Mammary epithelial cell (primary cell): ENCODE measurements at regions of chr14 and their contacts with region 1.

Region 1: DNA sequence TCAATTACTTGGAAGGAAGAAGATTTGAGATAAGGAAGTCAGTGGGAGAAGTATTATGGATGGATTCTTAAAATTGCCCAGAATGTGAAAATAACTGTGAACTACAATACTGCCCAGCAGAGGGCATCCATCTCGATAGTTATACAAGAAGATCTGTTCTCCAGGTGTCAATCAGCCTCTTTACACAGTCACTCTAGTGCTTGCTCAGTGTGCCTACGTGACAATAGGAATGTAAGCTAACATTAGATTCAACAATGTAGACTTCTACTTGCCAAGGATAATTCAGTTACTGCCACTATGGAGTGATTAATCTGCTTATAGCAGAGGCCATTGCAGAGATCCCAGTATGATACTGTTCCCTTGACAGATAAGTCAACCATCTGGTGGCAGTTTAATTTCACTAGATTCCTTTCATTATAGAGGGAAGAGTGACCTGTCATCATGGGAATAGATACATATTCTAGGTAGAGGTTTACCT is 10.6 kb upstream of the MAP4K5 start:
- DNase-seq: peak; percentile 60
- H3K4me3 ChIP-seq: no peak overlapping the region
- H3K27ac ChIP-seq: no peak overlapping the region
- H3K4me1 ChIP-seq: peaks cover 7% of the 10 kb centered on the region
- H3K27me3 ChIP-seq: no peaks in the 10 kb centered on the region
- CTCF ChIP-seq: peak; percentile 54 to 63

Region 2: DNA sequence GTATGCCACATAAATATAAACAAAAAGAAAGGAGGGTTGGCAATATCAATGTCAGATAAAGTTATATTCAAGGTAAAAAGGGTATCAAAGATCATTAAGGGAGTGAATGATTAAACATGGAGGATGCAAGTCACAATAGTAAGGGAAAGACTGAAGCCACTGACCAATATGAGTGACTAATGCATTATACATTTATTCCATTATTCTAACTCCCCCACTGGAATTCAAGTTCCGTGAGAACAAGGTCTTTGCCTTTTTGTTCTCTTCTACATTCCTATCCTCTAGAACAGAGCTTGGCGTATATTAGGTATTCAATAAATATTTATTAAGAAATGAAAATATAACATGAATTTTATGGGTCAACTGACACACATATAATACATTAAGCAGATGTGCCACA is 41.3 kb before region 1 on chr14:
- CTCF ChIA-PET with region 1: no interaction called
- dilution Hi-C with region 1: no loop called
- in situ Hi-C with region 1: no loop called
- intact Hi-C with region 1: no loop called
- DNase-seq: peak; percentile 70
- H3K4me3 ChIP-seq: no peak overlapping the region
- H3K27ac ChIP-seq: peak overlapping the region; percentile 75
- H3K4me1 ChIP-seq: peaks cover 18% of the 10 kb centered on the region
- H3K27me3 ChIP-seq: no peaks in the 10 kb centered on the region
- CTCF ChIP-seq: no peak

Region 3: GRCh38 chr14:50619556-50620141 is 76.7 kb after region 1 on chr14:
- CTCF ChIA-PET with region 1: no interaction called
- dilution Hi-C with region 1: no loop called
- in situ Hi-C with region 1: no loop called
- intact Hi-C with region 1: loop called (anchors 1 kb)
- DNase-seq: peak; percentile 32
- H3K4me3 ChIP-seq: no peak overlapping the region
- H3K27ac ChIP-seq: no peak overlapping the region
- H3K4me1 ChIP-seq: peaks cover 9% of the 10 kb centered on the region
- H3K27me3 ChIP-seq: no peaks in the 10 kb centered on the region
- CTCF ChIP-seq: peak; percentile 71 to 75

Region 4: DNA sequence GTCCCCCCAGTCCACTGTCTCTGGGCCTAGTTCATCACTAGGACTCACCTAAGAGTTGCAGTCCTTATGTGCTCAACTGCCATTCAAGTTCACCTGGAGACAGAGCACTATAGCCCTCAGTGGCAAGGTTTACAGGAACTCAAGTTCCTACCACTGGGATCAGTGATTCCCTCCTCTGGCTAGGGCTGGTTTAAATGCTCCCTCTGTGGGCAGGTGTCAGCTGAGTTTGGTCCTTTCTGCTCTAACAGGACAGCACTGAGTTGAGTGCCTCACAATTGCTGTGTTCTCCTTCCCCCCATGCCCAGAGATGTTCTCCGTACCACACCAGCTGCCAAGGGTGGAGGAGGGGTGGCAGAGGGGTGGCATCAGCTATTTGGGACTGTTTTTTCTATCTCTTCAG is 145.9 kb after region 1 on chr14:
- CTCF ChIA-PET with region 1: no interaction called
- dilution Hi-C with region 1: no loop called
- in situ Hi-C with region 1: no loop called
- intact Hi-C with region 1: loop called (anchors 1 kb)
- DNase-seq: peak; percentile 10
- H3K4me3 ChIP-seq: no peak overlapping the region
- H3K27ac ChIP-seq: no peak overlapping the region
- H3K4me1 ChIP-seq: no peaks in the 10 kb centered on the region
- H3K27me3 ChIP-seq: no peaks in the 10 kb centered on the region
- CTCF ChIP-seq: peak in 1 of 2 donors; percentile 47

Region 5: GRCh38 chr14:50714450-50715073 is 171.6 kb after region 1 on chr14:
- CTCF ChIA-PET with region 1: no interaction called
- dilution Hi-C with region 1: no loop called
- in situ Hi-C with region 1: no loop called
- intact Hi-C with region 1: loop called (anchors 1 kb)
- DNase-seq: peak; percentile 44
- H3K4me3 ChIP-seq: no peak overlapping the region
- H3K27ac ChIP-seq: no peak overlapping the region
- H3K4me1 ChIP-seq: no peaks in the 10 kb centered on the region
- H3K27me3 ChIP-seq: no peaks in the 10 kb centered on the region
- CTCF ChIP-seq: peak; percentile 55 to 61

Region 6: GRCh38 chr14:50778721-50779483 is 235.9 kb after region 1 on chr14:
- CTCF ChIA-PET with region 1: interaction called, 5 read pairs
- dilution Hi-C with region 1: no loop called
- in situ Hi-C with region 1: loop called (anchors 5 kb)
- intact Hi-C with region 1: loop called (anchors 1 kb)
- DNase-seq: peak; percentile 18
- H3K4me3 ChIP-seq: no peak overlapping the region
- H3K27ac ChIP-seq: no peak overlapping the region
- H3K4me1 ChIP-seq: peaks cover 28% of the 10 kb centered on the region
- H3K27me3 ChIP-seq: no peaks in the 10 kb centered on the region
- CTCF ChIP-seq: no peak